ENCODE measurements at regions of chr22 and their contacts with region 1.

Region 1: GRCh38 chr22:36144886-36145541 is 15.5 kb downstream of the APOL3 start:
- DNase-seq: peak in 2 of 3 donors; percentile 44 to 75
- ATAC-seq: peak; percentile 75 to 82 (median 80)
- H3K4me3 ChIP-seq: no peak overlapping the region
- H3K27ac ChIP-seq: peak overlapping the region in 2 of 3 donors; percentile 5 to 19
- H3K4me1 ChIP-seq: peaks cover 0 to 33% (median 12%) of the 10 kb centered on the region in 4 donors
- H3K27me3 ChIP-seq: no peaks in the 10 kb centered on the region
- CTCF ChIP-seq: peak; percentile 81 to 88 (median 85)
- POLR2A ChIP-seq: no peak

Region 2: GRCh38 chr22:36081023-36081431 is 64.0 kb before region 1 on chr22:
- intact Hi-C with region 1: no loop called
- DNase-seq: no peak
- ATAC-seq: no peak
- H3K4me3 ChIP-seq: no peak overlapping the region
- H3K27ac ChIP-seq: no peak overlapping the region
- H3K4me1 ChIP-seq: no peaks in the 10 kb centered on the region
- H3K27me3 ChIP-seq: no peaks in the 10 kb centered on the region
- CTCF ChIP-seq: no peak
- POLR2A ChIP-seq: no peak

Region 3: GRCh38 chr22:36180038-36180880 is 35.2 kb after region 1 on chr22:
- intact Hi-C with region 1: loop called (anchors 5 kb)
- DNase-seq: peak; percentile 86 to 87 (median 87)
- ATAC-seq: peak; percentile 95 to 99 (median 97)
- H3K4me3 ChIP-seq: no peak overlapping the region
- H3K27ac ChIP-seq: no peak overlapping the region
- H3K4me1 ChIP-seq: peaks cover 0 to 4% (median 0%) of the 10 kb centered on the region in 4 donors
- H3K27me3 ChIP-seq: no peaks in the 10 kb centered on the region
- CTCF ChIP-seq: peak; percentile 84 to 95 (median 92)
- POLR2A ChIP-seq: no peak

Region 4: DNA sequence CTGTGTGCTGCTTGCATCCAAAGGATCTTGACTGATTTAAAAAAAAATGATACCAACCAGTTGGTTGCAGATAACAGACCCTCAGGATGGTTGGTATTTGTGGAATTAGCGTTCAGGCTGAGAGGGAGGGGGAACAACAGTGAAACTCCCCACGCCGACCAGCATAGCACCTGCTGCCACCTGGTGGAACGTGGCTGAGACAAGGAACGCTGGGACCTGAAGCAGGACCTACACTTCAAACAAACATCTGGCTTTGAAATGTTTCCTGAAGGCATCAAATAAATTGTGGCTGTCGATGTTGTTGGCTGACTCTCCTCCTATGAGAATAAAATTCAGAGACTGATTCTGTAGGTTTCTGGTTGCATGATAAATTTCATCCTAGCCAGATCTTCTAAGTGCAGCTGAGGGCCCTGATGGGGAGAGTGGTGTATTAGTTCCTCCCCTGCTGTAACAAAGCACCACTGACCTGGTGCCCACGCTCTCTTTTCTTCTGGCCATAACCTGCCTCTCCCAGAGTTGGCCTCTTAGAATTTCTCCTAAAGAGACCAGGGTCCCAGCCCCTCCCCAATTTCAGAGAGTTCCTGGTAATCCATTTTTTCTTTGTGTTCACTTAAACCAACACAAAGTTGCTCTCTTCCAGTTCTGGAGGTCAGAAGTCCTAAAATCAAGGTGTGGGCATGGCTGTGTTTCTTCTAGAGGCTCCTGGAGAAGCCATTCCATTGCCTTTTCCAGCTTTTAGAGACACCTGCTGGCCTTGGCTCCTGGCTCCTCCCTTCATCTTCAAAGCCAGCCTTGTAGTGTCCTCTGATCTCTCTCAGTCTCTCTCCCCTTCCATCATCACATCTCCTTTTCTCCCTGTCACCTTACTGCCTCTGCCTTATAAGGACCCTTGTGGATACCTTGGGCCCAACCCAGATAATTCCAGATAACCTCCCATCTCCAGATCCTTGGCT is 77.1 kb after region 1 on chr22:
- intact Hi-C with region 1: loop called in 1 of 2 experiments (anchors 10 kb)
- DNase-seq: peak in 1 of 3 donors; percentile 63
- ATAC-seq: peak; percentile 68 to 86 (median 83)
- H3K4me3 ChIP-seq: no peak overlapping the region
- H3K27ac ChIP-seq: no peak overlapping the region
- H3K4me1 ChIP-seq: peaks cover 0 to 18% (median 0%) of the 10 kb centered on the region in 4 donors
- H3K27me3 ChIP-seq: no peaks in the 10 kb centered on the region
- CTCF ChIP-seq: peak; percentile 63 to 78 (median 73)
- POLR2A ChIP-seq: no peak

Measured in right lobe of liver (tissue), 6 donors.